CD8-positive, alpha-beta T cell (primary cell): ENCODE measurements at regions of chr7 and their contacts with region 1.

Region 1: DNA sequence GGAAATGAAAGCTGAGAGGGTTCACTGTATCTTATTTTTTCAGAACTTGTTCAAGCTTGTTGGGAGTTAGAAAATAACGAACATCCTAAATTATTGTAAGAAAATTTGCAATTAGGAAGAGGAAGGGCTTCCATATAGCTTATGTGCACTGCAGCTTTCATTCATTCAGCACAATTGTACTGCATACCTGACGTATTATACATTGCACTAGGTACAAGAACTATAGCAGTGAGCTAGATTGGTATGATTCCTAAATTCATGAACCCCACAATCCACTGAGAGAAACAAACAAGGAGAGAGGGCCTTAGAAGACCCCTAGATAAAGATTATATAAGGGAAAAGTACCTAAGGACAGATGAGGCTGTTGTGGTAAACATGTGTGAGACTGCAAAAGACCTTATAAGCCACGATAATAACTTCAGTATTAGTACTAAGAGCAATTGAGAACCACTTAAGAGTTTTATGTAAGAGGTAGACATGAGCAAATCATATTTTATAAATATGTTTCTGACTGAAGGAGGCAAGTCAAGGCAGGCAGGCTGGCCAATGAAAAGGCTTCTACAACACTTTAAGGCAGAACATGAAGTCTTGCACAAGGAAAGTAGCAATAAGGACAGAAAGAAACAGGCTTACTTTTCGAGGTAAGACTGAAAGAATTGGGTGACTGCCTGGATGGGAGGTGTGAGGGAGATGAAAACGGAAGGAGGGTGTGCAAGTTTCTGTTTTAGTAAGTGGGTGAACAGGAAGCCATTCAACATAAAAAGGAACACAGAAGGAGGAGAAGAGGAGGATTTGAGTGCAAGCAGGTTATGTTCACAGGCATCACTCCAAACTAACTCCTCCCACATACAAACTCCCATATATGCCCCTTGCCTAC is 77.9 kb upstream of the LRRN3 start:
- DNase-seq: peak in 7 of 9 experiments; percentile 3 to 79 (median 37)
- ATAC-seq: peak; percentile 80
- H3K4me3 ChIP-seq: peak overlapping the region; percentile 16 to 47
- H3K4me3 Mint-ChIP-seq: peak overlapping the region; percentile 74
- H3K27ac ChIP-seq: peak overlapping the region; percentile 58 to 69
- H3K27ac Mint-ChIP-seq: peak overlapping the region; percentile 89
- H3K4me1 ChIP-seq: peaks cover 84% of the 10 kb centered on the region
- H3K4me1 Mint-ChIP-seq: peaks cover 74% of the 10 kb centered on the region
- H3K27me3 ChIP-seq: no peaks in the 10 kb centered on the region
- H3K27me3 Mint-ChIP-seq: no peaks in the 10 kb centered on the region
- CTCF ChIP-seq: no peak

Region 2: GRCh38 chr7:111029574-111030251 is 16.7 kb after region 1 on chr7:
- CTCF ChIA-PET with region 1: interaction called, 3 read pairs
- POLR2A ChIA-PET with region 1: interaction called, 3 read pairs
- intact Hi-C with region 1: loop called (anchors 1 to 2 kb)
- DNase-seq: peak in 5 of 9 experiments; percentile 15 to 68 (median 42)
- ATAC-seq: no peak
- H3K4me3 ChIP-seq: no peak overlapping the region
- H3K4me3 Mint-ChIP-seq: peak overlapping the region; percentile 12
- H3K27ac ChIP-seq: peak overlapping the region; percentile 0 to 12
- H3K27ac Mint-ChIP-seq: peak overlapping the region; percentile 91
- H3K4me1 ChIP-seq: peaks cover 57% of the 10 kb centered on the region
- H3K4me1 Mint-ChIP-seq: peaks cover 56% of the 10 kb centered on the region
- H3K27me3 ChIP-seq: no peaks in the 10 kb centered on the region
- H3K27me3 Mint-ChIP-seq: no peaks in the 10 kb centered on the region
- CTCF ChIP-seq: no peak